Aorta (tissue), 5 donors: ENCODE measurements at regions of chrX and their contacts with region 1.

Region 1: DNA sequence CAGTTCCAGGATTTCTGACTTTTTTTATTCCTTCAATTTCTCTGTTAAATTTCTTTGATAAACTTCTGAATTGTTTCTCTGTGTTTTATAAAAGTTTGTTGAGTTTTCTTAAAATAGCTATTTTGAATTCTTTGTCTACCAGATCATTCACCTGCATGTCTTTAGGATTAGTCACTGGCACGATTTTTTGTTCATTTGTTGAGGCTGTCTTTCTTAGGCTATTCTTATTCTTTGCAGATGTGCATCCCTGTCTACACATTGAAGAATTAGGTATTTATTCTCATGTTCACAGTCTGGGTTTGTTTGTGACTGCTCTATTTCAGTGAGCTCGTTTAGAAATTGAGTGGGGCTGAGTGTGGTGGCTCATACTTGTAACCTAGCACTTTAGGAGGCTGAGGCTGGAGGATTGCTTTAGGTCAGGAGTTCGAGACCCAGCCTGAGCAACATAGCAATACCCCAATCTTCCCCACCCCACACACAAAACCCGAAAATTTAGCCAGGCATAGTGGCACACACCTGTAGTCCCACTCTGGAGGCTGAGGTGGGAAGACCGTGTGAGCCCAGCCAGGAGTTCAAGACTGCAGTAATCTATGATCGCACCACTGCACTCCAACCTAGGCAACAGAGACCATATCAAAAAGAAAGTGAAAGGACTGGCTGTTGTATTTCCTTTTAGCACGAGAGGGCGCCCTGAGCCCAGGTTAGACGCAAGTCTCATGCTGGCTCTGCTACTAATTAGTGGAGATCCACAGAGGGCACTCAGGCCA is 42.0 kb downstream of the F8 start:
- DNase-seq: peak; percentile 79 to 83
- ATAC-seq: peak; percentile 90
- H3K4me3 ChIP-seq: no peak overlapping the region
- H3K27ac ChIP-seq: no peak overlapping the region
- H3K4me1 ChIP-seq: no peaks in the 10 kb centered on the region
- H3K27me3 ChIP-seq: no peaks in the 10 kb centered on the region

Region 2: DNA sequence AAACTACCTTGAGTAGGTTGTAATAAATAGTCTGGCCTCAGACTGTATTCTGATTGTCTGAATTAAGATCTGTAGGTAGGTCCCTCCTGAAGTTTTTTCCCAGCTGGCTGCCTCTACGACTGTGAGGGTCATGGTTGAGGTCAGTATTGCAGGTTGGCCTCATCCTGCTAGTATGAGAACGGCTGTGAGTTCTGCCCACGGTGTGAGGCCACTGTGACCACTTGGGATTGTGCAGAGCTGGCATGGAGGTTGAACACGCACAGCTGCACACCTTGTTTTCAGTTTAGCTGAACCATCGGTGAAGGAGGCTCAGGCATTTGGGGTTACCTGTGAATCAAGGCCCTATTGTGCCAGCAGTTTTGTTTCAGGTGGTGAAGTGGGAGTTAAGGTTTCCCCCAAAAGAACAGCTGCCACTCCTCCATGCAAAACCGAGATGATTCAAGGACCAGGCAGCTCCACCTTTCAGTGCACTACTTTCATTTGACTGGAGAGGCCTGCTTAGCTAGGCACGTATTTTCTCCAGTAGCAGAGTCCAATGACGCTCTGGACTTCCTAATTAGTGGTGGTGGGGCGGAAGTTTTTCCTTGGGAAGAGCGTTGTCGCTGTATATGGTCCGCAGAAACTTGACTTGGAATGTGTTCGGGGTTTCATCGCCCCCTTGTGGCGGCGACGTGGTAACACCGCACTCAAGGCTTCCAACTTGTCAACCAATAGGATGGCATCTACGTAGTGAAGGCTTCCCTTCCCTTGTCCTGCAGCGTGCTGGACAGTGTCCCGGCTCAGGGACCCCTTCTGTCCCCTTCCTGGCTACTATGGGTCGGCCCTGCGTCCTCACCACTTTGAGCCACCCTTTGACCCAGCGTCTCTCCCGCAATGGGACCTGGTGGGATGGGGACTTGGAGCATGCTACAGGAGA is 76.6 kb after region 1 on chrX:
- intact Hi-C with region 1: loop called (anchors 2 to 5 kb)
- DNase-seq: peak; percentile 68 to 80
- ATAC-seq: peak; percentile 90
- H3K4me3 ChIP-seq: no peak overlapping the region
- H3K27ac ChIP-seq: peak overlapping the region in 1 of 2 donors; percentile 1
- H3K4me1 ChIP-seq: no peaks in the 10 kb centered on the region
- H3K27me3 ChIP-seq: no peaks in the 10 kb centered on the region

Region 3: GRCh38 chrX:155086202-155086840 is 105.8 kb after region 1 on chrX:
- intact Hi-C with region 1: loop called in 1 of 2 experiments (anchors 10 kb)
- DNase-seq: no peak
- ATAC-seq: no peak
- H3K4me3 ChIP-seq: no peak overlapping the region
- H3K27ac ChIP-seq: no peak overlapping the region
- H3K4me1 ChIP-seq: no peaks in the 10 kb centered on the region
- H3K27me3 ChIP-seq: no peaks in the 10 kb centered on the region

Region 4: DNA sequence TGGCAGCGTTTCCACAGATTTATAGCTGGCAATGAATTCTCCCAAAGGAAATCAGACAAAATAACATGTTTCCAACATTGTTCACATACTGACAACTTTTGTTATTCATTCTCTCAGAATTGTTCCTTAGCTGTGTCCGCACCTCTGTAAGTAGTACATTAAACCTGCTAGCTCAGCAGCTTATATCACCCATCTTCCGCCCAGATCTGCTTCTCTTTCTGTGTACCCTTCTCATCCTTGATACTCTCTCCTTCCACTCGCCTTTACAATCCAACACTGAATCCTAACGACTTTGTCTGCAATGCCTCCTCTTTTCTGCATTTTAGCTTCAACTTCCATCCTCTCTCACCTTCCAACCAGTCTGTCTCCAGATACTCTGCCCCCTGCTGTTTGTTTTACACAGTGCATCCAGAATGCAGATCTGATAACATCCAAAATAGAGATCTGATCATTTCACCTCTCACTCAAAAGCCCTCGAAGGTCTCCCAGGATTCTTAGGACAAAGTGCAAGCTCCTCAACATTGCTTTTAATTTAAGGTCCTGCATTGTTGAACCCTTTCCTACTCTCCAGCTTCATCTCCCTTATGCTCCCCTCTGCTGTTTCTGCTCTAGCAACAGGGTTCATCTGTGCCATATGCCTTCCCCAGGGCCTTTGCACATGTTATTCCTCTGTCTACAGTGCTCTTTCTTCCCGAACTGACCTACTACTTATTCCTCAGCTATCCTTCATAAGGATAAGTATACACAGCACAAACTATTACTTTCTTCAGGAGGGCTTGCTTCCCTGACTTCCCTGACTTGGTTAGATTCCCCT is 168.4 kb after region 1 on chrX:
- intact Hi-C with region 1: loop called in 1 of 2 experiments (anchors 10 kb)
- DNase-seq: no peak
- ATAC-seq: no peak
- H3K4me3 ChIP-seq: no peak overlapping the region
- H3K27ac ChIP-seq: no peak overlapping the region
- H3K4me1 ChIP-seq: no peaks in the 10 kb centered on the region
- H3K27me3 ChIP-seq: no peaks in the 10 kb centered on the region